Common myeloid progenitor, CD34-positive (primary cell): ENCODE measurements at regions of chr2 and their contacts with region 1.

Region 1: GRCh38 chr2:33673937-33674336 is 74.8 kb upstream of the FAM98A start:
- DNase-seq: peak; percentile 12 to 49 (median 46)
- H3K4me3 ChIP-seq: no peak overlapping the region
- H3K27ac ChIP-seq: no peak overlapping the region
- H3K4me1 ChIP-seq: no peaks in the 10 kb centered on the region
- H3K27me3 ChIP-seq: peaks cover 0 to 1% (median 0%) of the 10 kb centered on the region in 5 experiments

Region 2: DNA sequence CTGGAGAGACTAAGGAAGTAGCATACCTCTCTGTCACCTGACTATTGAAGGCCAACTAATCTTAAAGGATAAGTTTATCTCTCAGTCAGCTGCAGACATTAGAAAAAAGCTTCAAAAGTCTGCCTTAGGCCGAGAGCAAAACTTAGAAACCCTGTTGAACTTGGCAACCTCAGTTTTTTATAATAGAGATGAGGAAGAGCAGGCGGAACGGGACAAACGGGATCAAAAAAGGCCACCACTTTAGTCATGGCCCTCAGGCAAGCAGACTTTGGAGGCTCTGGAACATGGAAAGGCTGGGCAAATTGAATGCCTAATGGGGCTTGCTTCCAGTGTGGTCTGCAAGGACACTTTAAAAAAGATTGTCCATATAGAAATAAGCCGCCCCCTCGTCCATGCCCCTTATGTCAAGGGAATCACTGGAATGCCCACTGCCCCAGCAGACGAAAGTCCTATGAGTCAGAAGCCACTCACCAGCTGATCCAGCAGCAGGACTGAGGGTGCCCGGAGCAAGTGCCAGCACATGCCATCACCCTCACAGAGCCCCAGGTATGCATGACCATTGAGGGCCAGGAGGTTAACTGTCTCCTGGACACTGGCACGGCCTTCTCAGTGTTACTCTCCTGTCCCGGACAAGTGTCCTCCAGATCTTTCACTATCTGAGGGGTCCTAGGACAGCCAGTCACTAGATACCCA is 13.4 kb before region 1 on chr2:
- CTCF ChIA-PET with region 1: no interaction called
- POLR2A ChIA-PET with region 1: no interaction called
- DNase-seq: no peak
- H3K4me3 ChIP-seq: no peak overlapping the region
- H3K27ac ChIP-seq: no peak overlapping the region
- H3K4me1 ChIP-seq: no peaks in the 10 kb centered on the region
- H3K27me3 ChIP-seq: no peaks in the 10 kb centered on the region

Region 3: DNA sequence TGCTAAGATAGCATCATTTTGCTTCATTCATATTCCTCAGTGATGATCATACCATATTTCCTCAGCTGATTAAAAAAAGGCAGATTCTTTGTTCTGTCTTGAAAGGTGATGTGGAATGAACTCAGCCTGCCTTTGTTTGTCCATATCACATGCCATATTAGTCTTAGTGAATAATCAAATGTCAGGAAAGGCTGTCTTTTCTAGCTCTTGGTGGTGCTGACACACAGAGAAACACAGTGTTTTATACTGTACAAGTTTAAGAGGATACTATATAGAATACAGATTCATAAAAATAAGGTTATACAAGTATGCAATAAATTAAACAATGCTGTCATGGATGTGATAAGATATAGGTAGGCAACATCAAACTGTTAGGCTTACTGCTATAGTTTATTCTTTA is 22.3 kb after region 1 on chr2:
- CTCF ChIA-PET with region 1: no interaction called
- POLR2A ChIA-PET with region 1: no interaction called
- DNase-seq: no peak
- H3K4me3 ChIP-seq: no peak overlapping the region
- H3K27ac ChIP-seq: no peak overlapping the region
- H3K4me1 ChIP-seq: no peaks in the 10 kb centered on the region
- H3K27me3 ChIP-seq: no peaks in the 10 kb centered on the region

Region 4: GRCh38 chr2:34570266-34570872 is 896.4 kb after region 1 on chr2:
- CTCF ChIA-PET with region 1: interaction called, 13 read pairs
- POLR2A ChIA-PET with region 1: no interaction called
- DNase-seq: peak; percentile 18 to 32 (median 31)
- H3K4me3 ChIP-seq: no peak overlapping the region
- H3K27ac ChIP-seq: no peak overlapping the region
- H3K4me1 ChIP-seq: no peaks in the 10 kb centered on the region
- H3K27me3 ChIP-seq: no peaks in the 10 kb centered on the region

Region 5: DNA sequence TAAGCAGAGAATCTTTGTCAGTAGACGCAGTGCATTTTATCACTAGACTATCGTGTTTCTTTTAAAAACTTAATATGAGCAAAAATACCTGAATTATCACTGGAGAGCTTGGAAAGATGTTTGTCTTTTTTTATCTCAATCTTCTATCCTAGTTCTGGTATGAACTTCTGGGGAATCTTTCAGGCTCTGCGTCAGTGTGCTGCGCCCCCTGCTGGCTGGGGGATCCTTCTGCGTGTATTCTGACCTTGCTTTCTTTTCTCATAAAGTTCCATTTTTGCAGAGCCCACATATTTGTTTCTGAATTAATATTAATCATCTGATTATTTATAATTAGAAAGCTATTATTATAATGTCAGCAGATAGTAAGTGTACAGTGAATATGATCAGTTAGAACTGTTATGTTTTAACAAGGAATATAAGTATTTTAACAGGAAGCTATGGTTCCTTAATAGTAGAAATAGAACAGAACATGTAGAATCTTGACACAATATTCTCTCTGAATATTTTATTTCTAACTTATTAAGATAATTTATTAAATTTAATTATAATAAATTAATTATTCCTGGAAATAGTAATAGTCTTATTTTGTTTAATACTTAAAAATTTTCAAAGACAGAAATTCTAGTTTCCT is 1736.6 kb after region 1 on chr2:
- CTCF ChIA-PET with region 1: interaction called, 16 read pairs
- POLR2A ChIA-PET with region 1: no interaction called
- DNase-seq: peak; percentile 36 to 65 (median 53)
- H3K4me3 ChIP-seq: no peak overlapping the region
- H3K27ac ChIP-seq: no peak overlapping the region
- H3K4me1 ChIP-seq: no peaks in the 10 kb centered on the region
- H3K27me3 ChIP-seq: no peaks in the 10 kb centered on the region